Breast epithelium (tissue), 4 donors: ENCODE measurements at regions of chr4 and their contacts with region 1.

Region 1: DNA sequence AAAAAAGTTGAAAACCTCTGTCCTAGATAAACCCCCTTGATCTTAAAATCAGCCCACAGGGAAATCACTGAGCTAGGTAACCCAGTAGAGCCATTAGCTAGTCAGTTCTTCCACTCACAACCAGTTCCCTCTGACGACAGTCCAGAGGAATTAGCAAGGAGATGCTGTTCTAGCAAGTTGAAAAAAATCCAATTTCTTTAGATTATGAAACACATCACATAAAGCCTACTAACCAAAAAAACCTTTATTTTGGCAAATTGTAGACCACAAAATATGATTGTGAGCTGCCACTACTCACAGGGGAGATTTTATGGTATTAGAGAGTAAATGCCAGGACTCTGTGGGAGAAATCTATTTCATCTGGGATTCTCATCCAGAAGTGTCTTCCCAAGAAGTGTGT is 22.6 kb downstream of the ADAMTS3 start:
- DNase-seq: no peak
- H3K4me3 ChIP-seq: no peak overlapping the region
- H3K27ac ChIP-seq: no peak overlapping the region
- H3K4me1 ChIP-seq: no peaks in the 10 kb centered on the region
- H3K27me3 ChIP-seq: no peaks in the 10 kb centered on the region
- CTCF ChIP-seq: no peak
- POLR2A ChIP-seq: no peak

Region 2: DNA sequence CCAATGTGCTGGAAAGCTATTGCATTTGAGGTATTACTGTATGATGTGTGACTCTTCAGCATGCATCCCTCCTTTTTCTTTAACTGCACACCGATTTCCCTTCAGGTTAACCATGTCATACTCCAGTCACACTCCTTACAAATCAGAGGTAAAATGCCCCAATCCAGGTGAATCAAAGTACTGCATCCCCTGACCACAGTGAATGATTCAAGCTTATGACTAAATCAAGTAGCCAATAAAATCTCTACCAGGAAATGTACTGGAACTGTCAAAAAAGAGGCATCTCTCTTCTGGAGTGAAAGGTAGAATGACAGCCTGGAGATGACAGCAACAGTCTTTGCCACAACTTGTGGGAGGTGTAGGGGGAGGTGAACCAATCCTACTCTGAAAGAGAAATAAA is 12.2 kb after region 1 on chr4:
- intact Hi-C with region 1: loop called (anchors 2 kb)
- DNase-seq: no peak
- H3K4me3 ChIP-seq: no peak overlapping the region
- H3K27ac ChIP-seq: no peak overlapping the region
- H3K4me1 ChIP-seq: no peaks in the 10 kb centered on the region
- H3K27me3 ChIP-seq: no peaks in the 10 kb centered on the region
- CTCF ChIP-seq: no peak
- POLR2A ChIP-seq: no peak

Region 3: GRCh38 chr4:72779241-72779640 is 232.8 kb after region 1 on chr4:
- intact Hi-C with region 1: no loop called
- DNase-seq: no peak
- H3K4me3 ChIP-seq: no peak overlapping the region
- H3K27ac ChIP-seq: no peak overlapping the region
- H3K4me1 ChIP-seq: no peaks in the 10 kb centered on the region
- H3K27me3 ChIP-seq: no peaks in the 10 kb centered on the region
- CTCF ChIP-seq: no peak
- POLR2A ChIP-seq: no peak